Right ventricle myocardium superior (tissue), 1 donor: ENCODE measurements at regions of chr13 and their contacts with region 1.

Region 1: DNA sequence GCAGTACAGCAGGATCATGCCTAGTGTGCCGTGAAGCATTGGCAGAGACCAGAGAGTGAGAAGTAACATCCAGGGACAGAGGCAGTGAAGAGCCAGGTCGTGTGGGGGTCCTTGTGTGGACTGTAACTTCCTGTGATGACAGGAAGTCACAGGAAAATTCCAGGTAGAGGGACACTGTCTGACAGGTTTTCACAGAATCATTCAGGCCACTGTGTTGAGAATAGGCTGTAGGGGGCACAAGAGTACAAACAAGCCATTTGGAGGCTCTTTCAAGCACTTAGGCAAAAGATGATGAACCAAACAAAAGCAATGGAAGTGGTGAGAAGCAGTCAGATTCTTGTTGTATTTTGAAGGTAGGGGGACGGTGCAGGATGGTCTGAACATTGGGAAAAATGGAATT is 46.4 kb downstream of the N4BP2L1 start:
- DNase-seq: no peak
- ATAC-seq: peak; percentile 70

Region 2: GRCh38 chr13:32267836-32268439 is 113.6 kb before region 1 on chr13:
- intact Hi-C with region 1: no loop called
- DNase-seq: no peak
- ATAC-seq: no peak

Region 3: DNA sequence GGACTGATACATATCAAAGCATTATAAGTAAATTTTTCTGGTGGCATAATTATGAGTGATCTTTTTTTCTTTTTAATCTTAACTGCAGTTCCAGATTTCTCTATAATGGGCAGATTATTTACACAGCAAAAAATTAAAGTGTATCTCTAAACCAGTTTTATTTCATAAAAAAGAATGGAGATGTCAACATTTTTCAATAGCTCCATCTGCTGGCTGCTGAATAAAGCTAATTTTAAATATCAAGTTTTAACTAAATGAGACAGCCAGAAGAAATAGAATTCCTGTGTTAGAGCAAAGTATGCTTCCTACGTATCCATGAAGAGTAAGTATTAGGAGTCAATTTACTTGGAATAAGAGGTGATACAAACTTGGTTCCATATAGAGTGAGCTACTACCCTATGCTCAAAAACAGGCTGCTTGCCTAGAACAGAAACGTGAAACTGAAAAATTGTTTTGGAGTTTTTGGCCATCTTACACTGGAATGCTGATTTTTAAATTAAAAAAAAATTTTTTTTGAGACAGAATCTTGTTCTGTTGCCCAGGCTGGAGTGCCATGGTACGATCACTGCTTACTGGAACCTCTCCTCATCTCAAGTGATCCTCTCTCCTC is 199.7 kb after region 1 on chr13:
- intact Hi-C with region 1: loop called (anchors 5 kb)
- DNase-seq: no peak
- ATAC-seq: no peak